ENCODE measurements at regions of chr12 and their contacts with region 1.

Region 1: DNA sequence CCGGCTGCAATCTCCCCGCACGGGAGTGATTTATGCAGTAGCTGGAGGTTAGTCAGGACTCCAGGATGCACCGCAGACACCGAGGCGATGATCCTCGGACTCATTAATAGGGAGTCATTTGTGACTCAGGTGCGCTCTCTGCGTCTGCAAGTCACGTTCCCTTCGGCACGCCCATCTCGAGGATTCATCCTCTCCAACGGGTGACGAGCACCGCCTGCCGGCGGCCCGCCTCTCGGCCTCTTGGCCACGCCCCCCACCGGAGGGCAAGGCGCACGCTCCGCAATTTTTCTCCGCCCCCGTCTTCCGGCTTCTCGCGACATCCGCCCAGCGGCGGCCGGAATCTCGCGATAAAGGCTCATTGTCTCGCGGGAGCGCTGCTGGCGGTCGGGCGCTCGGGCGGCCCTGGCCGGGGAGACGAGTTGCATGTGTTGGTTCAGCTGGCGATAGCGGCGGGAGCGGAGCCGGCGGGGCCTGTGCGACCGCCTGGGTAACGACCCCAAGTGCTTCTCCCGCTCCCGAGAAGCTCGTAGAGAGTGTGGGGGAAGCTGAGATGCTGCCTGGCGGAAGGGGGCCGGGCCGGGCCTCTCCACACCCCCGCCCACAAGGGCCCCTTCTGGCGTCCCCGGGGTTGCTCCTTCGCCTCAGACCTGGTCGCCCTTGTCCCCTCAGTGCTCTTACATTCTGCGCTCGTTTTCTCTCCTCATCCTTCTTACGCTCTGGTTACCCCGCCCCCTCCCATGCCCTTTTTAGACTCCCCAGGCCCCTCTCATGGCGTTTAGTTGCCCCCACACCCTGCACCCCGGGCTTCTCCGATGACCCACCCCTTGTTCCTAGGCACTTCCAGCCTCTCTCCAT is at the start of gene DENR:
- DNase-seq: peak; percentile 96 to 99
- H3K4me3 ChIP-seq: peak within 1 kb of the TSS; percentile 90
- H3K27ac ChIP-seq: peak within 1 kb of the TSS; percentile 83 to 86
- H3K4me1 ChIP-seq: peaks cover 0 to 29% (median 15%) of the 10 kb centered on the region in 4 donors
- H3K27me3 ChIP-seq: no peaks in the 10 kb centered on the region
- CTCF ChIP-seq: peak; percentile 66 to 75

Region 2: GRCh38 chr12:121248622-121249021 is 1504.1 kb before region 1 on chr12:
- intact Hi-C with region 1: no loop called
- DNase-seq: no peak
- H3K4me3 ChIP-seq: no peak overlapping the region
- H3K27ac ChIP-seq: no peak overlapping the region
- H3K4me1 ChIP-seq: no peaks in the 10 kb centered on the region
- H3K27me3 ChIP-seq: no peaks in the 10 kb centered on the region
- CTCF ChIP-seq: no peak

Region 3: DNA sequence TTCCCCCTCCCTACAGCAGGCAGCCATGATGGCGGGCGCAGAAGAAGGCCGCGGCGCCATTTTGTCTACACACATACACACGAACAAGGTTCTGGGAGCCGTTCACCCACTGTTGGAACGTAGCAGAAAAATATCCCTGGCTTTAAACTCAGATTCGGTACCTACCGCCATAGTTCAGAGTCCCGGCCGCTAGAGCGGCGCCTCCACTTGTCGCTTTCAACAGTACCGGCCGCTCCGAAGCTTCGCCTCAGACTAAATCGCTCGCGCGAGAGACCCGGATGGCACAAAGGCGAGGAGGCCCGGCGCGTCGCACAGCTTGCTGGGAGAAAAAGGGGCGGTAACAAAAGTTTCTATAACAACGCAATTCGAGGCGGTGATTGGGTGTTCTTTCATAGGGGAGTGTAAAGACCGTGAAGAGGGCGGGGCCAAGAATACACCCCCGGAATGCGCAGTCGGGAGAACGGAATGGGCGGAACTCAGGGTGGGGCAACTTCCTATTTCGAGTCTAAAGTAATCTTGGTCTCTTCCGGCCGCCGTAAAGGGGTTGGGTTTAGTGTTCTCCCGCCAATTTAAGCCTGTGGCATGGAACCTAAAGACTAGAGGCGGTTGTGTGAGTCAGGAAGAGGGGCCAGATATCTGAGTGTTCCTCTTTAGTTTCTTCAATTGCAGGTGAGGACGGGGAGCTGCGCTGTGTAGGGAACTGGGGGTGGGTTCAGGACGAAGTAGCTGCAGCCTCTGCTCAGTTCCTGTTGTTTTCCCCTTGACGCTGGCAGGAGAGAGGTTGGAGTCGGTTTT is 225.8 kb before region 1 on chr12 and contains the starts of genes KNTC1 and RSRC2:
- intact Hi-C with region 1: loop called (anchors 5 kb)
- DNase-seq: peak; percentile 99
- H3K4me3 ChIP-seq: peak within 1 kb of the TSS; percentile 58 to 75
- H3K27ac ChIP-seq: peak within 1 kb of the TSS; percentile 91 to 98
- H3K4me1 ChIP-seq: peaks cover 0 to 43% (median 29%) of the 10 kb centered on the region in 4 donors
- H3K27me3 ChIP-seq: no peaks in the 10 kb centered on the region
- CTCF ChIP-seq: no peak

Region 4: GRCh38 chr12:122635471-122635870 is 117.2 kb before region 1 on chr12:
- intact Hi-C with region 1: loop called (anchors 5 kb)
- DNase-seq: no peak
- H3K4me3 ChIP-seq: no peak overlapping the region
- H3K27ac ChIP-seq: no peak overlapping the region
- H3K4me1 ChIP-seq: no peaks in the 10 kb centered on the region
- H3K27me3 ChIP-seq: no peaks in the 10 kb centered on the region
- CTCF ChIP-seq: no peak

Region 5: DNA sequence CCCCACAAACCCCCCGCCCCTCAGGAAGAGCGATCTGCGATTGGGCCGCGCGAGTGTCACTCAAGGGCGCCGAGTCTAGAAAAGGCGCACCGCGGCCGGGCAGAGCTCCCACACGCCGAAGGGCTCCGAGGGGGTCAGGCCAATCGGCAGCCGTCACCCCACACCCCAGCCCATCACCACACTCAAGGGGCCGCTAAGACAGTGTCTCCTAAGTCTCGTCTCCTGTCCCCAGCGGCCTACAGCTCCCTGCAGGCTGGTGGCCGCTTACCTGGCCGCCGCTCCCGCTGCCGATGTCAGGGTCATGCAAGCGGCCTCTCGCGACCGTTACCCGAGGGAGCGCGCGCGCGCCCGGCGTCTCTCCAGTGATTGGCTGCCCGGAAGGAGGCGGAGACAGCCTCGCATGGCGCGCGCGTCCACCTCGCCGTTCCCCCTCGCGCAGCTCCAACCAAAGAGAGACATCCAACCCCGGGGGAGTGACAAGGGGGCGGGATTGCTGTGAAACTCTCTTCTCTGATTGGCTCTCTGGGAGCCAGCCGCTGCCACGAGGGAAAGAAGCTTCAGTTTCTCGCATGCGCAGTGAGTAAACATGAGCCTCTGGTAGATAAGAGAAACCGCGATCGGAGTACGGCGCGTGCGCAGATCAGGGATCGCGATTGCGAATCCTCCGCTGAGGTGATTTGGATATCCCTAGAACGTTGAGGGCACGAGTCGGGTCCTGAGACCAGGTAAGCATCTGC is 480.3 kb after region 1 on chr12 and contains the starts of genes MPHOSPH9 and MTRFR:
- intact Hi-C with region 1: no loop called
- DNase-seq: peak; percentile 99 to 100
- H3K4me3 ChIP-seq: peak within 1 kb of the TSS; percentile 81 to 89
- H3K27ac ChIP-seq: peak within 1 kb of the TSS; percentile 90 to 95
- H3K4me1 ChIP-seq: peaks cover 0 to 40% (median 24%) of the 10 kb centered on the region in 4 donors
- H3K27me3 ChIP-seq: peaks cover 0 to 4% of the 10 kb centered on the region in 2 donors
- CTCF ChIP-seq: peak in 1 of 2 experiments; percentile 8